Kidney (tissue), 22 donors: ENCODE measurements at regions of chr17 and their contacts with region 1.

Region 1: GRCh38 chr17:82019690-82020571 is 2.7 kb downstream of the CENPX start:
- DNase-seq: peak in 3 of 5 donors; percentile 51 to 84 (median 55)
- H3K4me3 ChIP-seq: no peak overlapping the region
- H3K27ac ChIP-seq: no peak overlapping the region
- H3K4me1 ChIP-seq: peaks cover 0 to 22% (median 6%) of the 10 kb centered on the region in 3 donors
- H3K27me3 ChIP-seq: no peaks in the 10 kb centered on the region
- CTCF ChIP-seq: peak; percentile 46

Region 2: DNA sequence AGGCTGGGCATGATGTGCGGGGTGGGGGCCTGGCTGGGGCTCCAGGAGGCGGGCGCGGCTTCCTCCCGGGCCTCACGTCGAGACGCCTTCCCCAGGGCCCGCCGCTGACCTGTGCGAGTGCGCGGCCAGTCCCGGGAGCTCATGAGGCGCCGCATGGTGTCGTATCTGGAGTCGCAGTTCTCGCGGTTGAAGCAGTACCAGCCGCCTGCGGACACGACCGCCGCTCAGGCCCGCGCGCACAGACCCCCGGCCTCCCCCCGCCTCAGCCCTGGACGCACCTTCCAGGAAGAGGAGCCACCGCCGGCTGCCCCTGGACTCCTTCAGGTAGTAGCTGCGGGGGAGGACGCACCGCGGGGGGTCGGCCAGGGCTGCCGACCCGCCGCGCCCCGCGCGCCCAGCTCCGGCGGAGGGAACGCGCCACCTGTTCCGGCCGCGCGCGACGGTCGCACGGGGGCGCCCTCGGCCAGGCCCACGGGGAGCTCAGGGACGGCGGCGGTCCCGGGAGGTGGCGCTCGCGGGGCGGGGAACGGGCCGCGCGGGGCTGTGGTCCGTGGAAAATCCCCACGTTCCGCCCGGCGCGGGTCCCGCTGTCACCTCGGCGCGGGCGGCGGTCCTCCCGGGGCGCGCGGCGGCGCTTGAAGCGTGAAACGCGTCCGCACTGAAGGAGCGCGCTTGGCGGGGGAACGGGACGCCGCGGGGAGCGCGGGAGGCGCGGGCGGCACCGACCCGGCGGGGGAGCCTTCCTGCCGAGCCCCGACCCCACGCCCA is 60.4 kb before region 1 on chr17:
- intact Hi-C with region 1: loop called (anchors 10 kb)
- DNase-seq: peak; percentile 55 to 86 (median 80)
- H3K4me3 ChIP-seq: no peak overlapping the region
- H3K27ac ChIP-seq: no peak overlapping the region
- H3K4me1 ChIP-seq: peaks cover 0 to 3% (median 0%) of the 10 kb centered on the region in 3 donors
- H3K27me3 ChIP-seq: peaks cover 13% of the 10 kb centered on the region
- CTCF ChIP-seq: peak; percentile 98